AG04449 (cell line): ENCODE measurements at regions of chr15 and their contacts with region 1.

Region 1: GRCh38 chr15:62533687-62534086 is 368.6 kb upstream of the C2CD4B start:
- DNase-seq: no peak
- H3K4me3 ChIP-seq: no peak overlapping the region
- CTCF ChIP-seq: no peak

Region 2: DNA sequence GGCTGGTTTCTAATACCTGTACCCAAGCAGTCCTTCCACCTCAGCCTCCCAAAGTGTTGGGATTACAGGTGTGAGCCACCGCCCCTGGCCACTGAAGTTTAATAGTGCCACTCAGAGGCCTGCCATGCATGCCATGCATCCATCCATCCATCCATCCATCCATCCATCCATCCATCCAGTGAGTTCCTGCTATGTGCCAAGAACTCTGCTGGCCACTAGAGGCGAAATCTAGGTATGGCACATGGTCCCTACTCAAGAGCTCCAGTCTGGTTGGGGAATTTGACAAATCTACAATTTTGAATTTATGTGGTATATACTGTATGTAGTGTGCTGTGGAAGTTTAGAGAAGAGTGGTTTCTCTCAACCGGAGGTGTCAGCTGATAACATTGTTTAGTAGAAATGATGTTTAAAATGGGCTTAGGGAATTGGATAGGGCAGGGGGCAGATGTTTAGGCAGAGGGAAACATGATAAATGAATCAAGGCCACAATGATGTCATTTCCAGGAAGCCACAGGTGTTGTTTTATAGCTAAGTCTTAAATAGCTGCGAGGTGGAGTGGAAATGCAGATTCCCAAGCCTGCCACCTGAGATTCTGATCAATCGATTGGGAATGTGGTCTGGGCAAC is 15.8 kb after region 1 on chr15:
- CTCF ChIA-PET with region 1: interaction called, 13 read pairs
- POLR2A ChIA-PET with region 1: no interaction called
- DNase-seq: no peak
- H3K4me3 ChIP-seq: no peak overlapping the region
- CTCF ChIP-seq: peak; percentile 43